Right ventricle myocardium superior (tissue), 1 donor: ENCODE measurements at regions of chr7 and their contacts with region 1.

Region 1: GRCh38 chr7:149090397-149091195 is at the start of gene ZNF786:
- DNase-seq: peak; percentile 91
- ATAC-seq: peak; percentile 99
- total RNA-seq, gene ZNF786: 2.3 TPM

Region 2: GRCh38 chr7:149005241-149006050 is 85.2 kb before region 1 on chr7:
- intact Hi-C with region 1: loop called (anchors 5 kb)
- DNase-seq: peak; percentile 92
- ATAC-seq: peak; percentile 92

Region 3: GRCh38 chr7:149028346-149029109 is 62.1 kb before region 1 on chr7 and contains the start of gene PDIA4:
- intact Hi-C with region 1: loop called (anchors 5 kb)
- DNase-seq: peak; percentile 99
- ATAC-seq: peak; percentile 98
- total RNA-seq, gene PDIA4: 32.2 TPM

Region 4: DNA sequence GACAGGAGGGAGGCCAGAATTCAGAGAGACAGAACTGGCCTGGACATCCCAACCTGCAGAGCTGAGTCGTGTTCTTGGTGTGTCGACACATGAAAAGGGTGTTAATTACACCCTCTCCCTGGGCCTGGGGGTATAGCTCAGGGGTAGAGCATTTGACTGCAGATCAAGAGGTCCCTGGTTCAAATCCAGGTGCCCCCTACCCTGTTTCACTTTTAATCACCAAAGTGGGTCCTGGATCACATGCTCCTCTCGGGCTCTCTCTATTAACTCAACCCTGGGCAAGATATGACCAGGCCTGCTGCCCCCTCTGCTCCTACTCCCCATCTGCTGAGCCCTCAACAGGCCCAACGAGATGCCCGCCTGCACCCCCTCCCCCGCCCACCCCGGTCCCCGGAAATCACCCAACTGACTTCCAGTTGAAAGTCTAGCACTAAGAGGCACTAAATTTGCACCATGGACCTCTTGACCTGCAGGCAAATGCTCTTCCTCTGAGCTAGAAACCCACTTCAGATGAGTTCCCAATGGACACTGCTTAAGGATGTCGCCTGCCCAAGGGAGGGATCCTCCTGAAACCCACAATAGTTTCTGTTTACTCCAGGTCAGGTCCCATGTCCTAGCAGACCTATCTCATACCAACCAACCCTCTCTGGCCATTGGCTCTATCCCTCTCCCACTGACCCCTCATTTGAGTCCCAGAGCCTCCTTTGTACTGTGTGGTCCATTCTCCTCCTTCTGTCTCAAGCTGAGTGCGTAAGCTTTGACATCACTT is 545.1 kb after region 1 on chr7:
- intact Hi-C with region 1: no loop called
- DNase-seq: no peak
- ATAC-seq: no peak